ENCODE measurements at regions of chrX and their contacts with region 1.

Region 1: DNA sequence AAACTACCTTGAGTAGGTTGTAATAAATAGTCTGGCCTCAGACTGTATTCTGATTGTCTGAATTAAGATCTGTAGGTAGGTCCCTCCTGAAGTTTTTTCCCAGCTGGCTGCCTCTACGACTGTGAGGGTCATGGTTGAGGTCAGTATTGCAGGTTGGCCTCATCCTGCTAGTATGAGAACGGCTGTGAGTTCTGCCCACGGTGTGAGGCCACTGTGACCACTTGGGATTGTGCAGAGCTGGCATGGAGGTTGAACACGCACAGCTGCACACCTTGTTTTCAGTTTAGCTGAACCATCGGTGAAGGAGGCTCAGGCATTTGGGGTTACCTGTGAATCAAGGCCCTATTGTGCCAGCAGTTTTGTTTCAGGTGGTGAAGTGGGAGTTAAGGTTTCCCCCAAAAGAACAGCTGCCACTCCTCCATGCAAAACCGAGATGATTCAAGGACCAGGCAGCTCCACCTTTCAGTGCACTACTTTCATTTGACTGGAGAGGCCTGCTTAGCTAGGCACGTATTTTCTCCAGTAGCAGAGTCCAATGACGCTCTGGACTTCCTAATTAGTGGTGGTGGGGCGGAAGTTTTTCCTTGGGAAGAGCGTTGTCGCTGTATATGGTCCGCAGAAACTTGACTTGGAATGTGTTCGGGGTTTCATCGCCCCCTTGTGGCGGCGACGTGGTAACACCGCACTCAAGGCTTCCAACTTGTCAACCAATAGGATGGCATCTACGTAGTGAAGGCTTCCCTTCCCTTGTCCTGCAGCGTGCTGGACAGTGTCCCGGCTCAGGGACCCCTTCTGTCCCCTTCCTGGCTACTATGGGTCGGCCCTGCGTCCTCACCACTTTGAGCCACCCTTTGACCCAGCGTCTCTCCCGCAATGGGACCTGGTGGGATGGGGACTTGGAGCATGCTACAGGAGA is 13.8 kb downstream of the CMC4 start:
- DNase-seq: peak; percentile 66
- ATAC-seq: peak; percentile 80
- H3K4me3 Mint-ChIP-seq: peak overlapping the region; percentile 71
- H3K27ac Mint-ChIP-seq: peak overlapping the region; percentile 77
- H3K4me1 Mint-ChIP-seq: peaks cover 40% of the 10 kb centered on the region
- H3K27me3 Mint-ChIP-seq: no peaks in the 10 kb centered on the region

Region 2: DNA sequence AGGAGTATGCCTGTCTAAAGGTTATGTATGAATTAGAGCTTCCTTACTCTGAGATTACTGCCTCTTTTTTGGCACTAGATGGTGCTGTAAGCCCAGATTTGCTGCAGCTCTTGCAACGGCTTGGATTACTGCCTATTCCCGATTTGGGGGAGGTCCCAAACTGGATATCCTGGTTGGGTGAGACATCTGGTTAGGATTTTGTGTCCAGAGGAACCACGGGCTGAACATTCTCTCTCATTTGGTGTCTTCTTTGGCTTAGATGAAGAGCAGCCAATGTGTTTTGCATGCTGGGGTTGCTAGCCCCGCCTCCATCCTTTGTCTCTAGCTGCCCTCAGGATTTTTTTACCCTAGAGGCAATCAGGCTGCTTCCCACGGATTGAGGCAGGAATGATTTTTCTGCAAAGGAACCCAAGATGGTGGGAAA is 139.1 kb before region 1 on chrX:
- CTCF ChIA-PET with region 1: interaction called, 18 read pairs
- DNase-seq: peak; percentile 41
- ATAC-seq: peak; percentile 55
- H3K4me3 Mint-ChIP-seq: peak overlapping the region; percentile 46
- H3K27ac Mint-ChIP-seq: no peak overlapping the region
- H3K4me1 Mint-ChIP-seq: no peaks in the 10 kb centered on the region
- H3K27me3 Mint-ChIP-seq: peaks cover 7% of the 10 kb centered on the region

Region 3: DNA sequence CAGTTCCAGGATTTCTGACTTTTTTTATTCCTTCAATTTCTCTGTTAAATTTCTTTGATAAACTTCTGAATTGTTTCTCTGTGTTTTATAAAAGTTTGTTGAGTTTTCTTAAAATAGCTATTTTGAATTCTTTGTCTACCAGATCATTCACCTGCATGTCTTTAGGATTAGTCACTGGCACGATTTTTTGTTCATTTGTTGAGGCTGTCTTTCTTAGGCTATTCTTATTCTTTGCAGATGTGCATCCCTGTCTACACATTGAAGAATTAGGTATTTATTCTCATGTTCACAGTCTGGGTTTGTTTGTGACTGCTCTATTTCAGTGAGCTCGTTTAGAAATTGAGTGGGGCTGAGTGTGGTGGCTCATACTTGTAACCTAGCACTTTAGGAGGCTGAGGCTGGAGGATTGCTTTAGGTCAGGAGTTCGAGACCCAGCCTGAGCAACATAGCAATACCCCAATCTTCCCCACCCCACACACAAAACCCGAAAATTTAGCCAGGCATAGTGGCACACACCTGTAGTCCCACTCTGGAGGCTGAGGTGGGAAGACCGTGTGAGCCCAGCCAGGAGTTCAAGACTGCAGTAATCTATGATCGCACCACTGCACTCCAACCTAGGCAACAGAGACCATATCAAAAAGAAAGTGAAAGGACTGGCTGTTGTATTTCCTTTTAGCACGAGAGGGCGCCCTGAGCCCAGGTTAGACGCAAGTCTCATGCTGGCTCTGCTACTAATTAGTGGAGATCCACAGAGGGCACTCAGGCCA is 76.6 kb before region 1 on chrX:
- CTCF ChIA-PET with region 1: interaction called, 17 read pairs
- DNase-seq: peak; percentile 86
- ATAC-seq: peak; percentile 98
- H3K4me3 Mint-ChIP-seq: peak overlapping the region; percentile 78
- H3K27ac Mint-ChIP-seq: peak overlapping the region; percentile 85
- H3K4me1 Mint-ChIP-seq: peaks cover 25% of the 10 kb centered on the region
- H3K27me3 Mint-ChIP-seq: no peaks in the 10 kb centered on the region

Region 4: DNA sequence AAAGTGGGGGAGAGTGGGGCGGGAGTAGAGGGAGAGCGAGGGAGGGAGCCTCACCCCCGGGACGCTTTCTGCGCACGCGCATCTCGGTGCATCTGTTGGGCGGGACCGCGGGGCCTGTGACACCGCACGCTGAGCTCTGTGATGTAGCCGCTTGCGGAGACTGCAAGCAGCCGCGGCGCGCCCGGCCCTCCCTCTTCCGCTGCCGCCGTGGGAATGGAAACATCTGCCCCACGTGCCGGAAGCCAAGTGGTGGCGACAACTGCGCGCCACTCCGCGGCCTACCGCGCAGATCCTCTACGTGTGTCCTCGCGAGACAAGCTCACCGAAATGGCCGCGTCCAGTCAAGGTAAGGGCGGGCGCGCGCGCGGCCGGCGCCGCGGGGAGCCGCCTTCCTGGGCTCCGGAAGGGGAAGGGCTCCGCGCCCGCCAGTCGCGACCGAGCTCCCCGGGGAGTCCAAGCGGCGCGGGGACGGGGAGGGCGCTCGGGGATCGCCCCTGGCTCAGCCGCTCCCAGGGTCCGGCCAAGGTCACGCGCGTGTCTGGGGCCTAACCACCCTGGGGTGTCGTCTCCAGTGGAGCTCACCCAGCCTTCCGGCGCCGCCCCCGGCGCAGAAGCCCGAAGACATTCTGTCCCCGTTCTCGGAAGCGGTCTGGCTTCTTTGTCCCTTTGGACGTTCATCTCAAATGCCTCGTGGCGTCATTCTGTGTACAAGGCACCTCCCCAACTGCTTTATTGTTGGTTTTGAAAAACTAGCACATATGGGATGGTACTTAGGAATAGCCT is 30.2 kb before region 1 on chrX and contains the start of gene FUNDC2:
- CTCF ChIA-PET with region 1: interaction called, 10 read pairs
- DNase-seq: peak; percentile 96
- ATAC-seq: peak; percentile 86
- H3K4me3 Mint-ChIP-seq: peak within 1 kb of the TSS; percentile 85
- H3K27ac Mint-ChIP-seq: peak within 1 kb of the TSS; percentile 97
- H3K4me1 Mint-ChIP-seq: peaks cover 18% of the 10 kb centered on the region
- H3K27me3 Mint-ChIP-seq: no peaks in the 10 kb centered on the region
- total RNA-seq, gene FUNDC2: 44.3 to 52.6 TPM

Measured in activated CD8-positive, alpha-beta memory T cell treated with anti-CD3 and anti-CD28 coated beads, Interleukin-2, amount 10 ng/mL, durations not matched to agents 7 days and 5 days (primary cell).